ENCODE measurements at regions of chr22 and their contacts with region 1.

Region 1: DNA sequence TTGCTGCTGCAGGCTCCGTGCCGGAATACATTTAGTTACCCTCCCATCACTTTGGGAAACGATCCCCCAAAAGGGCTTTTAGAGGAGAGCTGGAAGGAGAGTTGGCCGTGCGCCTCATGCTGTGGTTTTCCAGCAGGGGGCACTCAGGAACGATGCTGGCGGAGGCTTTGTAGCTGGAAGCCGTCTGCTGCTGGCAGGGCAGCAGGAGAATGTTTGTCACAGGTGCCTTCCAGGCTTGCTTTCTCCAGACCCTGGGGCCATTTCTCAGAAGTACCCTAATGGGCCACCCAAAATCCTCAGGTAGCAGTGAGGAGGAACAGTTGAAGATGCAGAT is 30.0 kb upstream of the CABP7 start:
- DNase-seq: no peak

Region 2: GRCh38 chr22:29344137-29344536 is 345.7 kb before region 1 on chr22:
- intact Hi-C with region 1: no loop called
- DNase-seq: no peak

Region 3: GRCh38 chr22:30089655-30089974 is 399.8 kb after region 1 on chr22:
- intact Hi-C with region 1: loop called (anchors 5 kb)
- DNase-seq: no peak

Measured in cardiac septum (tissue), 1 donor.